Heart right ventricle (tissue), 16 donors: ENCODE measurements at regions of chr10 and their contacts with region 1.

Region 1: DNA sequence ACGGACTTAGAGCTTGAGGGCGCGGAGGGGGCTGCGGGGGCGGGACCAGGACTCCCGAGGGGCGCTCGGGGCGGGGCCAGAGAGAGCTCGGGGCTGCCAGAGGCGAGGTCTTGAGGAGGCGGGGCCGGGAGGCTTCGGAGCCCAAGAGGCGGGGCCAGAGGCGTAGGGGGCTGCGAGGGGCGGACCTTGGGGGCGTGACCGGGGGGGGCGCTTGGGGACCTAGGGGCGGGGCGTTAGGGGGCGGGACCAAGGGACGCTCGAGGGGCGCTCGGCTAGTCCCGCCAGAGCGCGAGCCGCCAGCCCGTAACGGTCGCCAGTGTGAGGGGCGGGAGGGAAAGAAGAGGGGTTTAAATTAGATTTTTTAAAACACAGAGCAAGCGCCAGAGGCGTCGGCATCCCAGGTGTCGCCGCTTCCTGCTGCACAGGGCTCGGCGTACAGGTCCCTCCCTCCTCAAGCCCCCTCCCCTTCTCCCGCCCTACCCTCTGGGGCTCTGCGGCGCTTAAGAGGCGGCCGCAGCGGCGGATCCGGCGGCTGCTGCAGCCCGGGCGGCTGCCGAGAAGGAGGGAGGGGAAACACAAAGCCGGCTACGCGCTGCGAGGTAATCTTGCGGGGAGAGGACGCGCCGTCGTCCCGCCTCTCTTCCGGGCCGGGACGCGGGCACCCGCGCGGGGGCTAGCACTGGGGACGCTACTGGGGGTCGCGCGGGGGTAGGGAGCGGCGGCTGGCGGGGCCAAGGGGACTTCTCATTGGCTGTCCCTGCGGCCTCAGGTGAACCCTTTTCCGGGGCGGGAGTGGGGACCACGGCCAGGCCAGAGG is at the start of gene ADD3:
- DNase-seq: peak; percentile 96 to 98
- ATAC-seq: peak; percentile 91 to 97 (median 93)
- H3K4me3 ChIP-seq: peak within 1 kb of the TSS; percentile 87 to 99 (median 96)
- H3K27ac ChIP-seq: peak within 1 kb of the TSS; percentile 89 to 99 (median 96)
- H3K4me1 ChIP-seq: peaks cover 0 to 78% (median 63%) of the 10 kb centered on the region in 9 donors
- H3K27me3 ChIP-seq: no peaks in the 10 kb centered on the region
- CTCF ChIP-seq: no peak
- total RNA-seq, gene ADD3: 62.5 to 106 (median 89.5) TPM

Region 2: GRCh38 chr10:109740436-109740835 is 267.5 kb before region 1 on chr10:
- intact Hi-C with region 1: no loop called
- DNase-seq: no peak
- ATAC-seq: peak in 1 of 8 donors; percentile 42
- H3K4me3 ChIP-seq: no peak overlapping the region
- H3K27ac ChIP-seq: no peak overlapping the region
- H3K4me1 ChIP-seq: no peaks in the 10 kb centered on the region
- H3K27me3 ChIP-seq: peaks cover 0 to 6% (median 0%) of the 10 kb centered on the region in 7 donors
- CTCF ChIP-seq: no peak

Region 3: DNA sequence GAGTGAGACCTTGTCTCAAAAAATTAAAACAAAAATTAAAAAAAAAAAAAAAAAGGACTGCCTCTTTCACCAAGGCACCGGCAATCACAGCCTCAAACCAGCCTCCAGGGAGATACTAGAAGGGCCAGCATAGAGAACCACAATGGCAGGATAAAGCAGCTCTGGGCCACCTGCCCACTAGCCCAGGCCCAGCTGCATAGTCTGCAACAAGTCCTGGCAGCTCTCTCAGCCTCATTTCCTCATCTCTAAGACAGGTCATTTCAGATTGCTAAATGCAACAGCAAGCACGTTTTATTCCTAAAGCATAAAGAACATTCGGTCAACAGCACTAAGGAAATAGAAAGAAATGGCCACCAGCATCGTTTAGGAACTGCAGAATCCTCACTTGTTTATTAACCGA is 113.4 kb before region 1 on chr10:
- intact Hi-C with region 1: loop called in 8 of 10 experiments (anchors 5 to 10 kb)
- DNase-seq: peak; percentile 73 to 81
- ATAC-seq: peak; percentile 75 to 86 (median 82)
- H3K4me3 ChIP-seq: no peak overlapping the region
- H3K27ac ChIP-seq: peak overlapping the region; percentile 61 to 86 (median 72)
- H3K4me1 ChIP-seq: peaks cover 21 to 99% (median 82%) of the 10 kb centered on the region in 9 donors
- H3K27me3 ChIP-seq: no peaks in the 10 kb centered on the region
- CTCF ChIP-seq: no peak

Region 4: DNA sequence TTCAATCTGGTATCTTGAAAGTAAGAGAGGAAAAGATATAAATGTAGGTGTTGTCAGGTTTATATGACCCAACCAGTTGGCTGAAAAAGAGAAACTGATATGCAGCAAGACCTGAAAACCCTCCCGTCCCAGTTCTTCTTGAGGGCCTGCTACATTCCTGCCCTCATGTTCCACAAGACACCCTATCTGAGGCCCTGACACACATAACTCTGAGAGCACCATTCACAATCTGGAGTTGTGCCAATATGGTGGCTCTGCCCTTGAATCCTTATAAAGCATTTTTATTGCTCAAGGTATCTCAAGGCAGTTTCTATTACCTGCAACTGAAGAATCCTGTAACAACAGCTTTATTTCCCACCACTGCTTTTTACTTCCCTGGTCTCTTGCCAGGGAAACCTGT is 101.6 kb before region 1 on chr10:
- intact Hi-C with region 1: no loop called
- DNase-seq: no peak
- ATAC-seq: no peak
- H3K4me3 ChIP-seq: no peak overlapping the region
- H3K27ac ChIP-seq: peak overlapping the region in 1 of 10 donors; percentile 41
- H3K4me1 ChIP-seq: peaks cover 4 to 40% (median 26%) of the 10 kb centered on the region in 9 donors
- H3K27me3 ChIP-seq: no peaks in the 10 kb centered on the region
- CTCF ChIP-seq: no peak

Region 5: DNA sequence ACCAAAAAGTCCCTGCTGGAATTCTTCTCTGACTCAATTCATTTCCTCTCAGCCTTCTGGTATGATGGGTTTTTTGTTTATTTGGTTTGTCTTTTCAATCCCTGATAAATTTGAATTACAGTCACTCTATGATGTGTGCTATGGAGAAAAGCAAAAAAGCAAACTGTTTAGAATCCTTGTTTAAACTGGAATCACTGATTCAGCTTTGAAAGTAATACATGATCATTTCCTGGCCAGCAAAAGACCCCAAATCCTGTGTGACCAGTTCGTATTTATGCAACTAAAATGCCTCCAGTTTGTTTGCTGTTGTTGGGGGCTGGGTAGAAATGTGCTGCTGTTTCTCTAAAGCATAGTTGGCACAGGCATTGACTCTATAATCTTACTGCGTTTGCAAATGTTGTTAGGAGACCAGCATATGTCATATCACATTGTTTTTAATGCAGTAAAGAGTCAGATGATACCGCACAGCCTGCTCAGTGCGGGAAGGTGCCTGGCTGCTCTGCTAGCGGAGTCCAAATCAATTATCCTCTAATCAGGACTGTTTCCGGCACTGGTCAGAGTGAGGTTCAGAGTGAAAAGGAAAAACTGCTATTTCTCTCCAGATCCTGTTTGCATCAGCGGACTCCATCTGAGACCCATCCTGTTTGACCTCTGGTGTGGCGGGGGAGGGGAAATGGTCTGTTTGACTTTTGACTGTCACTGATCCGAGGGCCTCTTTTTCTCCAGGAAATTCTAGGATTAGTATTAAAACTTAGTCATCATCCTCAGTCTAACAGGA is 40.8 kb before region 1 on chr10:
- intact Hi-C with region 1: loop called in 1 of 10 experiments (anchors 5 kb)
- DNase-seq: peak in 1 of 2 donors; percentile 60
- ATAC-seq: peak in 5 of 8 donors; percentile 7 to 60 (median 56)
- H3K4me3 ChIP-seq: no peak overlapping the region
- H3K27ac ChIP-seq: peak overlapping the region in 9 of 10 donors; percentile 18 to 75 (median 48)
- H3K4me1 ChIP-seq: peaks cover 17 to 60% (median 38%) of the 10 kb centered on the region in 9 donors
- H3K27me3 ChIP-seq: no peaks in the 10 kb centered on the region
- CTCF ChIP-seq: no peak

Region 6: GRCh38 chr10:110093722-110094121 is 85.8 kb after region 1 on chr10:
- intact Hi-C with region 1: loop called in 1 of 10 experiments (anchors 5 kb)
- DNase-seq: no peak
- ATAC-seq: no peak
- H3K4me3 ChIP-seq: no peak overlapping the region
- H3K27ac ChIP-seq: no peak overlapping the region
- H3K4me1 ChIP-seq: peaks cover 0 to 53% (median 26%) of the 10 kb centered on the region in 9 donors
- H3K27me3 ChIP-seq: no peaks in the 10 kb centered on the region
- CTCF ChIP-seq: no peak

Region 7: GRCh38 chr10:110210674-110211464 is 203.0 kb after region 1 on chr10:
- intact Hi-C with region 1: loop called in 1 of 10 experiments (anchors 5 kb)
- DNase-seq: peak; percentile 97
- ATAC-seq: peak; percentile 89 to 94 (median 91)
- H3K4me3 ChIP-seq: peak overlapping the region; percentile 61 to 92 (median 82)
- H3K27ac ChIP-seq: peak overlapping the region; percentile 94 to 100 (median 98)
- H3K4me1 ChIP-seq: peaks cover 12 to 57% (median 52%) of the 10 kb centered on the region in 9 donors
- H3K27me3 ChIP-seq: no peaks in the 10 kb centered on the region
- CTCF ChIP-seq: no peak

Region 8: GRCh38 chr10:110285501-110285900 is 277.6 kb after region 1 on chr10:
- intact Hi-C with region 1: loop called in 1 of 10 experiments (anchors 5 kb)
- DNase-seq: no peak
- ATAC-seq: no peak
- H3K4me3 ChIP-seq: no peak overlapping the region
- H3K27ac ChIP-seq: no peak overlapping the region
- H3K4me1 ChIP-seq: peaks cover 0 to 11% (median 0%) of the 10 kb centered on the region in 9 donors
- H3K27me3 ChIP-seq: no peaks in the 10 kb centered on the region
- CTCF ChIP-seq: no peak